IMR-90 (cell line): ENCODE measurements at regions of chr1 and their contacts with region 1.

Region 1: DNA sequence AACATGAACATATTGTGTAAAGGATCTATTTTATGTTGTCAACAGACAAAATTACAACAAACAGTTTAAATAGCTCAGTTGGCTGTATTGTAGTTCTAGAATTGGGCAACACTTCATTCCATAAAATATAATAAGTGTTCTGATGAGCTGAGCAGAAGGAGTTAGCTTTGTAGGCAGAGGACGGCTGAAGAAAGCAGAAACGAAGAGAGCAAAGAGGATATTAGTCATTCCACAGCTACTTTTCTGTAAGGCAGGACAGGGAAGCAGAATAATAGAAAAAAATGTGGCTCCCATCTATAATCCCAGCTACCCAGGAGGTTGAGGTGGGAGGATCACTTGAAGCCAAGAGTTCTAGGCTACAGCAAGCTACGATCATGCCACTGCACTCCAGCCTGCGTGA is 20.2 kb upstream of the IVNS1ABP start:
- DNase-seq: peak; percentile 39
- ATAC-seq: peak; percentile 88
- H3K4me3 ChIP-seq: no peak overlapping the region
- H3K27ac ChIP-seq: no peak overlapping the region
- H3K4me1 ChIP-seq: no peaks in the 10 kb centered on the region
- H3K27me3 ChIP-seq: no peaks in the 10 kb centered on the region; the same call in 1 of the 2 replicates
- CTCF ChIP-seq: no peak
- POLR2A ChIP-seq: no peak
- RAD21 ChIP-seq: no peak

Region 2: DNA sequence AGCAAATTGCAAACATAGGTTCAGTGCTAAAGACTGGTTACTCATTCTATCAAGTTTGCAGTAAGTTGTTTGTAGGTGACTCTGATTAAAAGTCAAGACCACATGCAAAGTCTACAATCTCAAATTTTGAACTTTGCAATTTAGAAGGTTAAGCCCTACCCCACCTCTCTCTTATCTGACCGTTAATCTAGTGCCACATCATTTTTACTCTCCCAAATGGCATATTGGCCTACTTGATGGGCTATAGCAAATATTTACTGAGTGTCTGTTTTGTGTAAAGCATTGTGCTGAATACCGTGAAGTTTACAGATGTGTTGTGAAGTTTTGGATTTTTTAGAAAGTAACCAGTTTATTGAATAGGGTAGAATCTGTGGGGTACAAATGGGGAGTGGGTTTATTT is 10.1 kb before region 1 on chr1:
- CTCF ChIA-PET with region 1: no interaction called
- POLR2A ChIA-PET with region 1: no interaction called
- dilution Hi-C with region 1: no loop called
- in situ Hi-C with region 1: no loop called
- intact Hi-C with region 1: no loop called
- DNase-seq: no peak
- ATAC-seq: no peak
- H3K4me3 ChIP-seq: no peak overlapping the region
- H3K27ac ChIP-seq: no peak overlapping the region
- H3K4me1 ChIP-seq: no peaks in the 10 kb centered on the region
- H3K27me3 ChIP-seq: no peaks in the 10 kb centered on the region
- CTCF ChIP-seq: no peak
- POLR2A ChIP-seq: no peak
- RAD21 ChIP-seq: no peak

Region 3: GRCh38 chr1:185375583-185375982 is 38.3 kb after region 1 on chr1:
- CTCF ChIA-PET with region 1: no interaction called
- POLR2A ChIA-PET with region 1: no interaction called
- dilution Hi-C with region 1: no loop called
- in situ Hi-C with region 1: no loop called
- intact Hi-C with region 1: no loop called
- DNase-seq: no peak
- ATAC-seq: no peak
- H3K4me3 ChIP-seq: no peak overlapping the region
- H3K27ac ChIP-seq: no peak overlapping the region
- H3K4me1 ChIP-seq: peaks cover 8% of the 10 kb centered on the region; the same call in 1 of the 2 replicates
- H3K27me3 ChIP-seq: no peaks in the 10 kb centered on the region
- CTCF ChIP-seq: no peak
- POLR2A ChIP-seq: no peak
- RAD21 ChIP-seq: no peak

Region 4: DNA sequence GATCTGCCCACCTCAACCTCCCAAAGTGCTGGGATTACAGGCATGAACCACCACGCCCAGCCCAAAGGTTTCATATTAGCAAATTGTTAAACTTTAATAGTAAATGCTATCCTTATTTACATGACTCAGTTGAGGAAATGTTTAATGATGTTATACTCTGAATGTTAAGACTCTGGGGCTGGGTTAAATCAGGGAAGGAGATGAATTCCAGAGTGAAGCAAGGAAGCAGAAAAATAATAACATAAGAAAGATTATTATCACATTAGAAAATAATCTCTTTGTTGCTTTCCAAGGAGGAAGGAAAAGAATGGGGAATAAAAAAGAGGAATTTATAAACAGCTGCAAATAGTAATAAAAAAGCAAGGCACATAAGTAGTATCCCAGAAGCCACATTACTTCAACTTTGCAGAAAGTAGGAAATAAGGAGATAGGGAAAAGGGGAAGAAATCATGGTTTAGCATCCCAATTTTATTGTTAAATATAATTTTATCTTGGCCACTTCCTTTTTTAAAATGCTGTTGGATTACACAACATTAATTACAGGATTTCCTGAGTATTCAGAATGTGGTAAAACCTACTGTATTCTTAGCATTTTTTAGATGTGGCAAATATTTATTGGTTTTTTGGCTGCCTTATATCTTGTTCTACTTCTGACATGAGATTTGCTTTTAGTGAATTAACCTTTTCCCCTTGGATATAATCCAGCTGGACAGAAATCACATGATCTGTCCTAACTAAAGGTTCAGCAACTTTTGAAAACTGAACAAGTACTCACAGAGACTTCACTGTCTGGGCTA is 1237.9 kb after region 1 on chr1:
- CTCF ChIA-PET with region 1: no interaction called
- POLR2A ChIA-PET with region 1: interaction called, 12 read pairs
- dilution Hi-C with region 1: no loop called
- in situ Hi-C with region 1: no loop called
- intact Hi-C with region 1: no loop called
- DNase-seq: no peak
- ATAC-seq: no peak
- H3K4me3 ChIP-seq: no peak overlapping the region
- H3K27ac ChIP-seq: no peak overlapping the region
- H3K4me1 ChIP-seq: no peaks in the 10 kb centered on the region
- H3K27me3 ChIP-seq: no peaks in the 10 kb centered on the region
- CTCF ChIP-seq: no peak
- POLR2A ChIP-seq: no peak
- RAD21 ChIP-seq: no peak